ENCODE measurements at regions of chr10 and their contacts with region 1.

Region 1: DNA sequence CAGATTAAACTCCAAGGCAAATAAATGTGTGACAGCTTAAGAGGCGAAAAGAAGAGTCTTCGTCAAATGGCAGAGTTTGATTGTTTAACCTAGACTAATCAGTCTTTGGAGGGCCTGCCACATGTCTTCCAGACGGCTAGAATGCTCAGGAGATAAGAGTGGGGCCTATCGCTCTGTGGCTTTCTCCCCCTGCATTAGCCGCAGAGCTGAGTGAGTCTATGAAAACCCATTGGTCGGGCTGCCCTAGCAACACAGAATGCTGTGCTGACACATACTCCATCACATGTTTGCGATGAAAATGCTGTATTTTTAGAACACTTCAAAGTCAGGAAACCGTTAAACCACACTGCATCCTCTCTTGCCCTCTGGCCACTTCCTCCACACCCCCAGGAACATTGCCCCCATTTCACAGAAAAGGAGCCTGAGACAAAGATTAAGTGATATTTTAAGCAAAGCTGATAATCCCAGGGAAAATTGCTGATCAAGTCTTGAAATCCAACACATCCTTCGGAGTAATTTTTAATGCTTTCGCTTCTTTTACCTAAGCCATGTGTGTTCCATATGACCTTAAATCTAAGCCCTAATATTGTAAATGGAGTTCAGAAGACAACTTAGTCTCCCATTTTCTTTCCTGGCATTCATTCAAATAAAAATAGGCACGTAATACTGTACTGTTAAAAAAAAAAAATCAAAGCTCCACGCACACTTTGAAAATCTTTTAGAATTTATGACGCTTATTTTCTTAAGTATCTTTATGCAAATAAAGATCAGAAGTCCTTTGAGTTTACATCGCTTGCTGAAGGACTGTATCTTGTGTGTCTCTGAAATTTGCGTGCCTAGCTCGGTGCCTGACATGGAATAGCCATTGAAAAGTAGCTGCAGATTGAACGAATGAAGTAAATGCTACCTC is 161.2 kb downstream of the CELF2 start:
- DNase-seq: peak; percentile 98
- ATAC-seq: peak; percentile 85
- H3K4me3 ChIP-seq: peak overlapping the region; percentile 57
- H3K27ac ChIP-seq: peak overlapping the region; percentile 95
- H3K4me1 ChIP-seq: peaks cover 71% of the 10 kb centered on the region
- H3K27me3 ChIP-seq: no peaks in the 10 kb centered on the region
- CTCF ChIP-seq: no peak
- EP300 ChIP-seq: peak; percentile 95 to 99
- POLR2A ChIP-seq: 0 out of 2 replicates have a peak, but pooled peaks have one; percentile 46
- RAD21 ChIP-seq: 0 out of 2 replicates have a peak, but pooled peaks have one; percentile 2

Region 2: DNA sequence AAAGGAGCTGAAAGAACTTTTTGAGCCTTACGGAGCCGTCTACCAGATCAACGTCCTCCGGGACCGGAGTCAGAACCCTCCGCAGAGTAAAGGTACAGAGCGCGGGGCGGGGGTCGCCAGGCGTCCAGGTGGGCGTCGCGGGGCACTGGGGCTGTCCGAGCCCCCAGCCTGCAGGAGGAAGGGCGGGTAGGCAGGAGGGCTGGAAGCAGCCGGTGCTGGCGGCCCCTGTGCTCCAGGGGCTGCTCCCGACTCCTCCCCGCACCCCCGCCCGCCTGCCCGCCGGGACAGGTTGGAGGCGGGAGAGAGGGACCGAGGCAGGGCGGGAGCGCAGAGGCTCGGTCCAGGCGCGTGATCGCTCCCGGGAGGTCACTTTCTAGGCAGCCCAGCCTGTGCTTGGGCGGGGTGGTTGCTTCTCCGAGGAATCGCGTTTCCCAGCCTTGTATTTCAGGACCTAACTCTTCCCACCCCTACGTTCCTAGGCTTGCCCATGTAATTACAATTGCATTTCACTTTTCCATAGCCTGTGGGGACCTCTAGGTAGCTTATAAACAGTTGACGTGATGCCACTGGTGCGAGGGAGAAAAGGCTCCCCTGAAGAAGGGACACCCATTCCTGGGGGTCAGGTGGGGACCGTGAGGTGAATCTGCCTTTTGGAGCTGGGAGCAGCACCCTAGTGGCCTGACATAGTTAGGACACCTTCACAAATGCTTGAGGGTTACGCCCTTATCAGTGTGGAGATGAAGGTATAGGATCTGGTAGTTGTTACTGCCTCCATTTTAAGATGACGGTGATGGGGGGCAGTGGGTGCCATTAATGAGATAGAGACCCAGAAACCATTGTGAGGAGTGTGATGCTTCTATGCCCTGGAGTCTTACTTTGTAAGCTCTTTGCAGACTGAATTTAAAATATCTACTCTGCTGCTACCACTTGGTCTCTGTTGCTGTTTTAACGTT is 13.0 kb before region 1 on chr10:
- CTCF ChIA-PET with region 1: interaction called, 36 read pairs
- POLR2A ChIA-PET with region 1: interaction called, 106 read pairs
- RAD21 ChIA-PET with region 1: interaction called, 87 read pairs
- SMC1A ChIA-PET with region 1: interaction called, 175 read pairs
- in situ Hi-C with region 1: no loop called
- intact Hi-C with region 1: loop called (anchors 2 kb)
- DNase-seq: no peak
- ATAC-seq: peak; percentile 69
- H3K4me3 ChIP-seq: peak overlapping the region; percentile 96
- H3K27ac ChIP-seq: peak overlapping the region; percentile 95
- H3K4me1 ChIP-seq: peaks cover 21% of the 10 kb centered on the region
- H3K27me3 ChIP-seq: no peaks in the 10 kb centered on the region
- CTCF ChIP-seq: peak; percentile 66 to 89 (median 72)
- EP300 ChIP-seq: no peak
- POLR2A ChIP-seq: peak; percentile 54; the same call in 1 of the 2 replicates
- RAD21 ChIP-seq: peak; percentile 68

Region 3: GRCh38 chr10:11197266-11197712 is 18.4 kb after region 1 on chr10:
- CTCF ChIA-PET with region 1: interaction called, 8 read pairs
- POLR2A ChIA-PET with region 1: interaction called, 7 read pairs
- RAD21 ChIA-PET with region 1: interaction called, 12 read pairs
- SMC1A ChIA-PET with region 1: interaction called, 17 read pairs
- in situ Hi-C with region 1: no loop called
- intact Hi-C with region 1: loop called (anchors 2 kb)
- DNase-seq: peak; percentile 79
- ATAC-seq: peak; percentile 85
- H3K4me3 ChIP-seq: no peak overlapping the region
- H3K27ac ChIP-seq: peak overlapping the region; percentile 63
- H3K4me1 ChIP-seq: peaks cover 84% of the 10 kb centered on the region
- H3K27me3 ChIP-seq: no peaks in the 10 kb centered on the region
- CTCF ChIP-seq: no peak
- EP300 ChIP-seq: peak; percentile 64 to 87
- POLR2A ChIP-seq: peak; percentile 61; the same call in 1 of the 2 replicates
- RAD21 ChIP-seq: no peak

Region 4: GRCh38 chr10:11225935-11226334 is 47.1 kb after region 1 on chr10:
- CTCF ChIA-PET with region 1: interaction called, 10 read pairs
- POLR2A ChIA-PET with region 1: interaction called, 5 read pairs
- RAD21 ChIA-PET with region 1: interaction called, 10 read pairs
- SMC1A ChIA-PET with region 1: interaction called, 17 read pairs
- in situ Hi-C with region 1: no loop called
- intact Hi-C with region 1: no loop called
- DNase-seq: no peak
- ATAC-seq: peak; percentile 79
- H3K4me3 ChIP-seq: 0 out of 2 replicates have a peak overlapping the region, but pooled peaks have one; percentile 8
- H3K27ac ChIP-seq: peak overlapping the region; percentile 77
- H3K4me1 ChIP-seq: peaks cover 62% of the 10 kb centered on the region
- H3K27me3 ChIP-seq: no peaks in the 10 kb centered on the region
- CTCF ChIP-seq: no peak
- EP300 ChIP-seq: 0 out of 4 replicates have a peak, but pooled peaks of 1 of the 2 experiments have one; percentile 23
- POLR2A ChIP-seq: no peak
- RAD21 ChIP-seq: no peak

Region 5: DNA sequence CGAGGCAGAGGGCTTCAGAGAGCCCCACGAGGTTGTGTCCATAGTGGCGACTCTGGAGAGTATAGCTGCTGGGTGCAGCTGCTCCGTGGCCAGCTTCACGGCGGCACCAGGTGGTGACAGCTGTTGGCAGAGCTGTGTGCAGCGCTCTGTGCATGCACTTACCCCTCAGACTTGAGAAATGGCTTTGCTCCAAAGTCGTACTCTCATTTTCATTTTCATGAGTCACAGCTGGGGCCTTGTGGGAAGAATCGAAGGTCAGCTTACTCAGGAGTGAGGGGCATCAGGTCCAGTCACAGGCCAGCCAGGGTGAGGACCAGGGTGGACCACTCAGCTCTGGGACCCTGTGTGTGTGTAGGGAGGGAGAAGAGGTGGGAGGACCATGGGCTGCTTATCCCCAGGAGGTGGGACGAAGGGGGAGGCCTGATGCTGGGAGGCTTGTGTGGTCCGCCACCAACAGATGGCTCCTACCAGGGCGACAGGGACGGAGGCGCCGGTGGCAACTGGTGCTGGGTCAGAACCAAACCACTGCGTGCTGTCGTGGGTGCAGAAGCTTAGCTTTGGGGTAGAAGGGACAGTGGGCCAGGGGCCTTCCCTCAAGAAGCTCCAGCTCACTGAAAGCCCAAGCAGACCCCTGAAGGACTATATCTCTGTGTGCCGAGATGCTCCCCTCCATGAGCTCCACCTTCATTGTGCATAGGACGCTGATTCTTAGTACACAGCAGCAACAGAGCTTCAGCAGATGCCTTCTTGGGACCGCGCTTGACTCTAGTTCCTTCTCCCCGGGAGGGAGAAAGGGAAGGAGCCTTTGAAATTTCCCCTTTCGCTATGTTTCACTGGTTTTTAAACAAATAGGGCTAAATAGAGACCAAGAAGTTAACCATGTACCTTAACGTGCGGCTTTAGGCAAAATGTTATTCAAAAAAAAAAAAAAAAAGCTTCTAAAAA is 63.9 kb after region 1 on chr10:
- CTCF ChIA-PET with region 1: interaction called, 89 read pairs
- POLR2A ChIA-PET with region 1: interaction called, 130 read pairs
- RAD21 ChIA-PET with region 1: interaction called, 212 read pairs
- SMC1A ChIA-PET with region 1: interaction called, 417 read pairs
- in situ Hi-C with region 1: no loop called
- intact Hi-C with region 1: loop called (anchors 1 kb)
- DNase-seq: peak; percentile 90
- ATAC-seq: peak; percentile 58
- H3K4me3 ChIP-seq: peak overlapping the region; percentile 57
- H3K27ac ChIP-seq: peak overlapping the region; percentile 97
- H3K4me1 ChIP-seq: peaks cover 80% of the 10 kb centered on the region
- H3K27me3 ChIP-seq: no peaks in the 10 kb centered on the region
- CTCF ChIP-seq: peak in 1 of 3 experiments; percentile 40; a peak in 2 of 6 replicates
- EP300 ChIP-seq: peak in 1 of 2 experiments; percentile 85; a peak in 2 of 4 replicates
- POLR2A ChIP-seq: peak; percentile 86
- RAD21 ChIP-seq: peak; percentile 2; the same call in 1 of the 2 replicates

Region 6: DNA sequence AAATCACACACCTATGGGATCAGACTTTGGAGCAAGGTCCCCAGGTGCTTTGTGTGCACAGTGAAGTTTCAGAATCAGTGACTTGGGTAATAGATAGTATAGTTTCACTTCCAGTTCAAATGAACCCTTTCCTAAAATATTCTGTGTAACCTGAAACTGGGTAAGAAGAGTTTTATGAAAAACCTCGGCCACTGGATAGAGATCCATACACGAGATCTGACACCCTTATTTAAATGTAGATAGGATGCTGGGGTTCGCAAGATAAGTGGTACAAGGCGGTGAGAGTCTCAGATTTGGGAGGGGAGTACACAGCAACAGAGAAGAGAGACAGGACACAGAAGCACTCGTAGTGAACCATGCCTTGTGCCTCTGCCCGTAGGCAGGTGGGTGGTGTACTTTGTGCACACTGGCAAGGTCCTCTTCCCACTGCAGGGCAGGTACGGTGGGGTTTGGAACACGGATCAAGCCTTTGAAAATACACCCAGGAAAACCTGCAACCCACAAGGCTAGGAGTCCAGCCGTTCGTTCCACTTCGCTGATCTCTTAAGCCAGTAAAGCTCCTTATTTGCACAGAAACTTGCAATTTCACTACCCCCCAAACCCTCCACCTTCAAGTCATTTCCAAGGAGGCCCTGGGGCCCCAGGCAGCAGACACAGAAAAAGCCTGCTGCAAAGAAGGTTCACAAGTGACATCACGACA is 269.8 kb after region 1 on chr10:
- CTCF ChIA-PET with region 1: no interaction called
- POLR2A ChIA-PET with region 1: no interaction called
- RAD21 ChIA-PET with region 1: interaction called, 3 read pairs
- SMC1A ChIA-PET with region 1: no interaction called
- in situ Hi-C with region 1: no loop called
- intact Hi-C with region 1: loop called (anchors 10 kb)
- DNase-seq: peak; percentile 44
- ATAC-seq: peak; percentile 84
- H3K4me3 ChIP-seq: peak overlapping the region; percentile 63
- H3K27ac ChIP-seq: peak overlapping the region; percentile 85
- H3K4me1 ChIP-seq: peaks cover 37% of the 10 kb centered on the region
- H3K27me3 ChIP-seq: no peaks in the 10 kb centered on the region
- CTCF ChIP-seq: no peak
- EP300 ChIP-seq: no peak
- POLR2A ChIP-seq: no peak
- RAD21 ChIP-seq: no peak

Region 7: DNA sequence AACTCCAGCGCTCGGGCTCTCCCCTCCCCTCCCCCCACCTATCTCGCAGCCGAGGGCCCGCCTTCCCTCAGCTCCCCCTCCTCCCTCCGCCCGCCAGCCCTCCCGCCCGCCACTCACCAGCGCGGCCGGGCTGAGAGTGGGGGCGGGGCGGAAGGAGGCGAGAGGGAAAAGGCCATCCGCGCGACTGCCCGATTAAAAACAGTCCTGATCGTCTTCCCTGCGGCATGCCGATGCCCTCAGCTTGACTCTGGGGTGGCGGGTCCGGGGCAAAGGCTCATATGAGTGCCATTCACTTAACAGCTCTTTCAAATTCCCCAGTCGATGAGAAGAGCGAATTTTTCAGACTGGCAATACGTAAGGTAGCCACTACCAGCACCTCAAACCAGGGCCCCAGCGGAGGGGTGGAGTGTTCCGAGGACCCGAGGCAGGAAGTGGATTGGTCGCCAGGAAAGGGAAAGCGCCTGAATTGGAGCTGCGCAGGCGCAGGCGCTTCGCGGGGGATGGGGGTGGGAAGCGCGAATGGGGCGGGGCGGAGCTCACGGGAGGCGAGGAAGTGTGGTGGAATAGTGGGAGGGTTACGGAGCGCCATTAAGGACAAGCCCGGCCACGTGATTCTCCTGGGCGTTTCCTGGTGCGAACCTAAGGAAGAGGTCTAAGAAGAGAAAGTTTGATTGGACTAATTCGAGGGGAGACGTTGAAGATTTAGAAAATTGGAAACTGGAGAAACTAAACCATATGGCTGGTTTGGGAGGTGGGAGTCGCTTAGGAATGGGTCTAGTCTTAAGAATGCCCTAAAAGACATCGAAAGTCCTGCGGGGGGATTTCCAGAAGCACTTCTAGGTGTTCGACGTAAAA is 864.2 kb after region 1 on chr10 and contains the start of gene UPF2:
- CTCF ChIA-PET with region 1: no interaction called
- POLR2A ChIA-PET with region 1: no interaction called
- RAD21 ChIA-PET with region 1: no interaction called
- SMC1A ChIA-PET with region 1: no interaction called
- in situ Hi-C with region 1: loop called (anchors 10 kb)
- intact Hi-C with region 1: no loop called
- DNase-seq: peak; percentile 96
- ATAC-seq: peak; percentile 66
- H3K4me3 ChIP-seq: peak within 1 kb of the TSS; percentile 88
- H3K27ac ChIP-seq: peak within 1 kb of the TSS; percentile 97
- H3K4me1 ChIP-seq: peaks cover 15% of the 10 kb centered on the region
- H3K27me3 ChIP-seq: no peaks in the 10 kb centered on the region
- CTCF ChIP-seq: no peak
- EP300 ChIP-seq: no peak; a peak in 1 of 4 replicates
- POLR2A ChIP-seq: no peak; the same call in 1 of the 2 replicates
- RAD21 ChIP-seq: no peak
- polyA plus RNA-seq, gene UPF2: 21.2 to 22.2 TPM

Measured in GM12878 (cell line).